ENCODE measurements at regions of chr17 and their contacts with region 1.

Region 1: GRCh38 chr17:81977211-81978027 is at the start of gene ASPSCR1:
- DNase-seq: peak; percentile 95
- ATAC-seq: peak; percentile 83
- H3K4me3 Mint-ChIP-seq: peak within 1 kb of the TSS; percentile 94
- H3K27ac Mint-ChIP-seq: peak within 1 kb of the TSS; percentile 98
- H3K4me1 Mint-ChIP-seq: peaks cover 32% of the 10 kb centered on the region
- H3K27me3 Mint-ChIP-seq: no peaks in the 10 kb centered on the region
- total RNA-seq, gene ASPSCR1: 23.3 to 26.5 TPM

Region 2: DNA sequence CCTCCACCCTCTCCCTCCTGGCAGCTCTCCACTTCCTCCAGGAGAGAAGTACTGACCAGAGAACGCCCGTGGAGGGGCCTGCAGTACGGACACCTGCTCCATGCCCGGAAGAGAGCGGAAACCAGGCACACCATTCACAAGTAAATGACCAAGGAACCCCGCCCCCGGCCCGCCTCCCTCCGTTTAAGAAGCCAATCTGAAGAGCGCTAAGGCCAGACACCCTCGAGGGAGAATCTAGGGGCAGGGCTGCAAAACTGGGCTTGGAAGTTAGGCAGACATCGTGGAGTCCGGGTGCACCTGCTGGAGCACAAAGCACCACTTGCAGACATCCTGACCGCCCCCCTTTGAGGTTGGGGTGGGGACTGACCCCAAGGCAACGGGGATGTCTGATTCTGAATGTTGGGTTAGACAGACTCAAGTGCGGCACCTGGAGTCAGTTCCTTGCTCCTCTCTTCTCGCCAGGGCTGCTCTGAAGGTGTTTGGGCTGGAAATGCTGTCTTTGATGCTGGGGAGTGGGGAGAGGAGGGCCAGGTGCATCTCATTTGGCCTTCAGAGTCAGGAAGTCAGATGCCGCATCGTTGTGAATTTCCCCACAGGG is 424.3 kb before region 1 on chr17:
- CTCF ChIA-PET with region 1: no interaction called
- POLR2A ChIA-PET with region 1: no interaction called
- intact Hi-C with region 1: loop called in 1 of 2 experiments (anchors 2 kb)
- DNase-seq: peak; percentile 91
- ATAC-seq: peak; percentile 78
- H3K4me3 Mint-ChIP-seq: peak overlapping the region; percentile 89
- H3K27ac Mint-ChIP-seq: peak overlapping the region; percentile 86
- H3K4me1 Mint-ChIP-seq: peaks cover 38% of the 10 kb centered on the region
- H3K27me3 Mint-ChIP-seq: no peaks in the 10 kb centered on the region

Region 3: DNA sequence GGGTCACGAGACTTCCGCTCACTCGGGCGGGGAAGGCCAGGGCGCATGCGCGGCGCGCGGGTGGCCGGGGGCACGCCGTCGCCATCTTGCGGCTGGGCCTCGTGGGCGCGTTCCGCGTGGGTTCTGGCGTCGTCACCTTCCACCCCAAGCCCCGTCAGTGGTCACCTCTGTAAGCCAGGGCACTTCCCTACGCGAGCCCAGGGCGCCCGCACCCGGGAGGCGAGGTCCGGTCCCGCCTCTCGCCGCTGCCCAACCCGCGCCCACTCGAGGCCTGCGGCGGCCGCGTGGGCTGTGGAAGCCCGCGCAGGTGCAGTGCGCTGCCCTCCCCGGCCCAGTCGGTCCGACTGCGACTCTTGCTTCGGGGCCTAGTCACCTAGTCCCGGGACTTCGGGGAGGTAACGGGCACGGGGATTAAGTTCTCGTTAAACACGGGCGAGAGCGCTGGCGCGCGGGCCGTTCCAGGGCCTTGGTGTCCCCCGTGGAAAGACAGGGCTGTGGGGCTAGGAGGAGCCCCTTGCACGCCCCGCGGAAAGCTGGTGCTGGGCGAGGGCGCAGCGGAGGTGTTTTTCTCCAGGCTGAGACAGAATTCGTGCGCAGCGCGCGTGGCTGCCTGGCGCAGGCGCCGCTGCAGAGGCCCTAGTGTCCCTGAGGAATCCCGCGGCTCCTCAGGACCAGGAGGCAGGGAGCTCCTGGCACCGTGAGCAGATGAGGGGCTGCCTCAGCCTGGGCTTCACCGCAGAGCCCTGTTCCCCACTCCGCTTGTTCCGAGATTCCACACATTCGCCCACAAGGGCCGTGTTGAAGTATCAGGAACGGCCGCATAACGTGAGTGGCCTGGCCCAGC is 105.8 kb before region 1 on chr17:
- CTCF ChIA-PET with region 1: no interaction called
- POLR2A ChIA-PET with region 1: no interaction called
- intact Hi-C with region 1: loop called in 1 of 2 experiments (anchors 1 kb)
- DNase-seq: peak; percentile 98
- ATAC-seq: no peak
- H3K4me3 Mint-ChIP-seq: peak overlapping the region; percentile 81
- H3K27ac Mint-ChIP-seq: peak overlapping the region; percentile 92
- H3K4me1 Mint-ChIP-seq: peaks cover 34% of the 10 kb centered on the region
- H3K27me3 Mint-ChIP-seq: no peaks in the 10 kb centered on the region

Region 4: GRCh38 chr17:81884520-81884919 is 92.9 kb before region 1 on chr17:
- CTCF ChIA-PET with region 1: no interaction called
- POLR2A ChIA-PET with region 1: no interaction called
- intact Hi-C with region 1: no loop called
- DNase-seq: no peak
- ATAC-seq: peak; percentile 24
- H3K4me3 Mint-ChIP-seq: no peak overlapping the region
- H3K27ac Mint-ChIP-seq: no peak overlapping the region
- H3K4me1 Mint-ChIP-seq: peaks cover 17% of the 10 kb centered on the region
- H3K27me3 Mint-ChIP-seq: no peaks in the 10 kb centered on the region

Region 5: GRCh38 chr17:81917565-81918332 is 59.7 kb before region 1 on chr17 and contains the start of gene SIRT7:
- CTCF ChIA-PET with region 1: no interaction called
- POLR2A ChIA-PET with region 1: no interaction called
- intact Hi-C with region 1: loop called in 1 of 2 experiments (anchors 2 kb)
- DNase-seq: peak; percentile 90
- ATAC-seq: peak; percentile 87
- H3K4me3 Mint-ChIP-seq: peak within 1 kb of the TSS; percentile 85
- H3K27ac Mint-ChIP-seq: peak within 1 kb of the TSS; percentile 82
- H3K4me1 Mint-ChIP-seq: peaks cover 23% of the 10 kb centered on the region
- H3K27me3 Mint-ChIP-seq: no peaks in the 10 kb centered on the region
- total RNA-seq, gene SIRT7: 29.3 to 31.8 TPM

Region 6: GRCh38 chr17:81959362-81960129 is 17.9 kb before region 1 on chr17:
- CTCF ChIA-PET with region 1: interaction called, 7 read pairs
- POLR2A ChIA-PET with region 1: no interaction called
- intact Hi-C with region 1: loop called in 1 of 2 experiments (anchors 1 kb)
- DNase-seq: peak; percentile 86
- ATAC-seq: peak; percentile 90
- H3K4me3 Mint-ChIP-seq: peak overlapping the region; percentile 38
- H3K27ac Mint-ChIP-seq: no peak overlapping the region
- H3K4me1 Mint-ChIP-seq: no peaks in the 10 kb centered on the region
- H3K27me3 Mint-ChIP-seq: peaks cover 11% of the 10 kb centered on the region

Region 7: GRCh38 chr17:82450170-82451106 is 473.0 kb after region 1 on chr17 and contains the start of gene CYBC1:
- CTCF ChIA-PET with region 1: no interaction called
- POLR2A ChIA-PET with region 1: no interaction called
- intact Hi-C with region 1: loop called in 1 of 2 experiments (anchors 1 kb)
- DNase-seq: peak; percentile 98
- ATAC-seq: peak; percentile 69
- H3K4me3 Mint-ChIP-seq: peak within 1 kb of the TSS; percentile 87
- H3K27ac Mint-ChIP-seq: peak within 1 kb of the TSS; percentile 97
- H3K4me1 Mint-ChIP-seq: peaks cover 46% of the 10 kb centered on the region
- H3K27me3 Mint-ChIP-seq: no peaks in the 10 kb centered on the region
- total RNA-seq, gene CYBC1: 286 to 329 TPM

Measured in activated CD4-positive, alpha-beta T cell treated with anti-CD3 and anti-CD28 coated beads for 36 hours (primary cell).